Heart left ventricle (tissue), 16 donors: ENCODE measurements at regions of chr12 and their contacts with region 1.

Region 1: DNA sequence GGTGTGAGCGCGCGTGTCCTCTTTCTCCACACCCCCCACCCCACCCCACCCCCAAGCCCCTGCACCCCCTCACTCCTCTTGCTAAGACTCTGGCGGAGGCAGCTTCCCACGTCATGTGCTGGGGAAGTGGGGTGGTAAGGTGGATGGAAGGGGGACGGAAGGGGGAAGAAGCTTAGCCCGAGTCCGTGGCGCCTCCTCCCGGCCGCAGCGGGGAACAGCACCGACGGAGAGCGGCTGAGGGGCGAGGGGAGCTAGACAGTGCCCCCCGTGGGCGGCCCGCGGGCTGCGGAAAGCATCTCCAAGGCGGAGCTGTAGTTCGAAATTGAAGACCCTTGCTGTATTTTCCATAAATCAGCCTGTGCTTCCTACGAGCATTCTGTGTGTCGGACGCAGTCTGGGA is 588 bp upstream of the GRIN2B start:
- DNase-seq: no peak
- ATAC-seq: no peak
- H3K4me3 ChIP-seq: peak overlapping the region in 9 of 12 donors; percentile 2 to 46 (median 26)
- H3K27ac ChIP-seq: no peak overlapping the region
- H3K4me1 ChIP-seq: peaks cover 0 to 22% (median 5%) of the 10 kb centered on the region in 12 donors
- H3K27me3 ChIP-seq: peaks cover 19 to 90% (median 66%) of the 10 kb centered on the region in 9 donors
- CTCF ChIP-seq: peak in 6 of 12 donors; percentile 5 to 37 (median 22)
- POLR2A ChIP-seq: no peak

Region 2: DNA sequence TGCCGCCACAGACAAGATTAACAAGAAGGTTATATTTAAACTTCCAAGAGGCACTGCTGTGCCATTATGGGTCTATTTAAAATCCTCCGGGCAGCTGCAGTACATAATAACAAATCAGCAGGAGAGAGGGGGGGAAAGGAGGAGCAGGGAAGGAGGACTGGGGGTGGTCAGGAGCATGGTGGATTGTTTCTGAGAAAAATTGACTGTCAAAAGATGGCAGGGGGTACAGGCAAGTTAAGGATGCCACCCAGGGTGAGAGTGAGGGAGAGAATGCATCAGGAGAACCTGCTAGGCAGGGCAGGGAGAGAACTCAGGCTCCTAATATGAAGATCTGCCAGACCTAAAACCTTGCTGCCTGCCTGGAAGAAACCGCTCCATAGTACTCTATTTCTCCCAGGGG is 182.4 kb before region 1 on chr12:
- intact Hi-C with region 1: no loop called
- DNase-seq: no peak
- ATAC-seq: no peak
- H3K4me3 ChIP-seq: no peak overlapping the region
- H3K27ac ChIP-seq: no peak overlapping the region
- H3K4me1 ChIP-seq: no peaks in the 10 kb centered on the region
- H3K27me3 ChIP-seq: no peaks in the 10 kb centered on the region
- CTCF ChIP-seq: no peak
- POLR2A ChIP-seq: no peak

Region 3: DNA sequence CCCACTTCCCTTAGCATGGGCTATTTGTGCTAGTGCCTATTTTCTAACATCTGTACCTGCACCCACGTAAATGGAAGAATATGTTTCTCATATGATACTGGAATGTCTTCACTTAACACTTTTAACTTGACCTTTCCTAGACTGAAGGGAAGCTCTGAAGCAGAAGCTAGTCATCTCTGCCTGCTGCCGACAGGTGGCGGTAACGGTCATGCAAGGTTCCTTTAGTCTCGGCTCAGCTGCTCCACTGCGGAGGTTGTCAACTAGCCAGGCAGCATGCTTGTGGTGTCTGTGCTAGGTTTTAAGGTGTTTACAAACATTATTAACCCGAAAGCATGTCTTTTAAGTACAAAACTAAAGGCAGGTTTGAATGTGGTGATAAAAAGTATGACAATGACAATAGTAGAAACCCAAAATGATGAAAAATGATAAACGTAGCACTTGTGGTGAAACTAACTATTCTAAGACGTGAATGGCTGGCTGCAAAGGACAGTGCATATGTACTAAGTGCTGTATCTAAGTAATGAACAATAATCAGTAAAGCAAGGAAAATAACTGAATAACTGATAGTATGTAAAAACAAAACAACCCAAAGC is 117.8 kb before region 1 on chr12:
- intact Hi-C with region 1: loop called in 1 of 10 experiments (anchors 10 kb)
- DNase-seq: peak; percentile 58 to 75 (median 69)
- ATAC-seq: peak in 3 of 4 donors; percentile 60 to 85 (median 68)
- H3K4me3 ChIP-seq: no peak overlapping the region
- H3K27ac ChIP-seq: no peak overlapping the region
- H3K4me1 ChIP-seq: no peaks in the 10 kb centered on the region
- H3K27me3 ChIP-seq: peaks cover 0 to 33% (median 0%) of the 10 kb centered on the region in 9 donors
- CTCF ChIP-seq: peak; percentile 78 to 94 (median 87)
- POLR2A ChIP-seq: no peak

Region 4: DNA sequence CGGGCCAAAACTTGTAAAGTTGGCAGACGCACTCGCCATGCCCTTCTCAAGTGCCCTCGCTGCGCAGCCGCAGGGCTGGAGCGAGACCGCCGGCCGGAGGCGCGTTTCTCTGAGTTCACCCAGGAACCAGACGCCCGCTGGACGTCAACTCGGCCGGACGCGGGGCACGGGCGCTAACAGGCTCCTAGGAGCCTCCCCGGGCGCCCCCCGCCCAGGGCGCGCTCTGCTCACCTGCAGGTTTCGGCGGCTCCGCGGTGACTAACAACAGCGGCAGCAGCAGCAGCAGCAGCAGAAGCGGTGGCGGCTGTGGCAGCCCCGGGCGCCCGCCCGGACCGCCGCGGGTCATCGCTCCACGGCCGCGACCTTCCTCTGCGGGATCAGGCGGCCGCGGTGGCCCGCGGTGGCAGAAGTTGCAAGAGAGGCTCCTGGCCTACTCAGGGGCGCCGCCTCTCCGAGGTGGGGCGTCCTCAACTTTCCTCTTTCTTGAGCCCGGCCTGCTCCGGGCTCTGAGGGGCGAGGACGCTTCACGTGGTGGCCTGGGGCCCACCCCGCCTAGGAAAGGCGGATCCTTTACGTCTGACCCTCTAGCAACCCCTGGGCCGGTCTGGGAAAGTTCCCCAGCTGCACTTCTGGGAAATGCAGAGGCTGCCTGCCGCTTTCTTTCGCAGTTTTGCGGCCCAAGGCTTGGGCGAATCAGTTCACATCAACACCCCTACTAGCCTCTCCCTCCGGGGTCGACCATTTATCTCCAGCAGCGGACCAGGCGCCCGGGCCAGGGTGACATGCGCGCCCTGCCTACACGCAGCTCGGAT is 585.6 kb after region 1 on chr12 and contains the start of gene PLBD1:
- intact Hi-C with region 1: no loop called
- DNase-seq: peak; percentile 77 to 91 (median 88)
- ATAC-seq: peak; percentile 81 to 95 (median 92)
- H3K4me3 ChIP-seq: peak within 1 kb of the TSS; percentile 45 to 79 (median 68)
- H3K27ac ChIP-seq: peak within 1 kb of the TSS; percentile 67 to 97 (median 92)
- H3K4me1 ChIP-seq: peaks cover 0 to 33% (median 3%) of the 10 kb centered on the region in 12 donors
- H3K27me3 ChIP-seq: no peaks in the 10 kb centered on the region
- CTCF ChIP-seq: peak in 1 of 12 donors; percentile 11
- POLR2A ChIP-seq: peak in 1 of 2 donors; percentile 78
- total RNA-seq, gene PLBD1: 11.9 to 49.1 (median 26.5) TPM